ENCODE measurements at regions of chr11 and their contacts with region 1.

Region 1: DNA sequence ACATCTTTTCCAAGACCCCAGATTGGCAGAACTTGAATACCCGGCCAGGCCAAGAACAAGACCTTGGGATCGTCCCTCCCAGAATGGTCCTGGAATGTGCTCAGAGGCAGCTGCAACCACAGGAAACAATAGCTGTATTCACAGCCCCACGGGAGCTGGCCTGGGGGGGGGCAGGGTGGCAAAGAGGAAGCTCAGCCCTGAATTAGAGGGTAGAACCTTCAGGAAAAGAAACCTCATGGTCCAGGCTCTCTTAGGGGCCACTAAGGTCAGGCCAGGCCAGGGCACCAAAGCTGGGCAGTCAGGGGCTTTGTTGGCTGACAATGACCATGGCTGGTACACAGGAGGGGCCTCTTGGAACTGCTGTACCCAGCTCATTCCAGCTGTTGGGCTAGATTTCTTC is 17.3 kb downstream of the RPL27A start:
- DNase-seq: peak; percentile 79
- H3K4me3 Mint-ChIP-seq: no peak overlapping the region
- H3K27ac Mint-ChIP-seq: peak overlapping the region; percentile 82
- H3K4me1 Mint-ChIP-seq: peaks cover 20% of the 10 kb centered on the region
- H3K27me3 Mint-ChIP-seq: no peaks in the 10 kb centered on the region
- CTCF ChIP-seq: no peak

Region 2: DNA sequence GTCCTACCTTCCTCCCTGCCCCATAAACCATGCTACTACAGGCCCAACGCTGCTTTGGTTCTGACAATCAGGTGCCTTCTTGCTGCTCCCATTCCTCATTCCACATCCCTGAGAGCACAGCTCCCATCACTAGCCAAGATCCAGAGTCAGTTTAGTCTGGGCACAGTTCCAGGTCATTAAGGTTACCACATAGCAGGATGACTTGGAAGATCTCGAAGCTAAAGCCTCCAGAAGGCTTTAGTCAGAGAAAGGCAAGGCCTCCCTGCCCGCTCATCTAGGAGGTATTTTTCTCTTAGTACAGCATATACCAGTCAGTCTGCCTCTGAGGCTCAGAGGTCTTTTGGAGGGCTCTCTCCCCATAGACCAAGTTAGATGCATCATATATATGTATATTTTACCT is 47.8 kb before region 1 on chr11:
- CTCF ChIA-PET with region 1: no interaction called
- intact Hi-C with region 1: no loop called
- DNase-seq: no peak
- H3K4me3 Mint-ChIP-seq: no peak overlapping the region
- H3K27ac Mint-ChIP-seq: no peak overlapping the region
- H3K4me1 Mint-ChIP-seq: no peaks in the 10 kb centered on the region
- H3K27me3 Mint-ChIP-seq: no peaks in the 10 kb centered on the region
- CTCF ChIP-seq: no peak

Region 3: DNA sequence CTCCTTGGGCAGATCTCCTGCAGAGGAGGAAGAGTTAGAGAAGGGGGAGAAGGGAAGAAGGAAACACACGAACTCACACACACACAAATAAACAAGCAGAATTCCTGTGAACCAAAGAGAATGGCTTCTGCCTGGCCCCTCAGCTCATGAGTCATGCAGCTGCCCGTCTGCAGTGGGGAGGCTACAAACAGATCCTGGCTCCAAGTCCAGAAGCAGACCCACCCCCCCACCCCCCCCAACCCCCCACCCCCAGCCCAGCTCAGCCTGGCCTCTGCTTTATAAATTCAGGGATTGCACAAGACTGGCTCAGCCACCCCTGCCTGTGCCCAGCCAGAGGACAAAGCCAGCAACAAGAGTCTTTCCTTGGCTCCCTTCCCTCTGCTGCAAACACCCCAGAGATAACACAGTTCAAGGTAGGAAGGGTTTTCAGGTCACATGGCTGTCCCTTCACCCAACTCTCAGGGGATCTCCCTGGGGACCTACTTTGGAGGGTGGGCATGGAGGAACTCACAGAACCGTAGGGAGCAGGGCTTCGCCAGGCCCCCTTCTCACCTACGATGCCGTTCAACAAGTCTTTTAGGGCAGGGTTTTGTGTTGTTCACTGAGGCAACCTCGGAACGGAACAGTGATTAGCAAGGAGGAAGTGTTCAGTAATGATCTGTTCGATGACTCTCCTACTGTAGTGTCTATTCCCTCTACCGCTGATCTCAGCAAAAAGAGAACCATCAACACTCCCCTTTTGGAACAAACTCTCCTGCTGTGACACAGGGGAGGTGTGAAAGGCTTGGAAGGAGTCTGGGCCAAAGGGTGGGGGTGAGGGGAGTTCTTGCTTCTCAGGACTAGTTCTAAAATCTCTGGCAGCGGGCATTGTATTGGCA is 18.2 kb after region 1 on chr11:
- CTCF ChIA-PET with region 1: interaction called, 5 read pairs
- intact Hi-C with region 1: loop called (anchors 2 kb)
- DNase-seq: peak; percentile 43
- H3K4me3 Mint-ChIP-seq: peak overlapping the region; percentile 36
- H3K27ac Mint-ChIP-seq: peak overlapping the region; percentile 88
- H3K4me1 Mint-ChIP-seq: peaks cover 59% of the 10 kb centered on the region
- H3K27me3 Mint-ChIP-seq: no peaks in the 10 kb centered on the region
- CTCF ChIP-seq: no peak

Region 4: GRCh38 chr11:8754241-8754640 is 54.3 kb after region 1 on chr11:
- CTCF ChIA-PET with region 1: no interaction called
- intact Hi-C with region 1: loop called (anchors 5 kb)
- DNase-seq: no peak
- H3K4me3 Mint-ChIP-seq: no peak overlapping the region
- H3K27ac Mint-ChIP-seq: no peak overlapping the region
- H3K4me1 Mint-ChIP-seq: peaks cover 19% of the 10 kb centered on the region
- H3K27me3 Mint-ChIP-seq: no peaks in the 10 kb centered on the region
- CTCF ChIP-seq: no peak

Region 5: DNA sequence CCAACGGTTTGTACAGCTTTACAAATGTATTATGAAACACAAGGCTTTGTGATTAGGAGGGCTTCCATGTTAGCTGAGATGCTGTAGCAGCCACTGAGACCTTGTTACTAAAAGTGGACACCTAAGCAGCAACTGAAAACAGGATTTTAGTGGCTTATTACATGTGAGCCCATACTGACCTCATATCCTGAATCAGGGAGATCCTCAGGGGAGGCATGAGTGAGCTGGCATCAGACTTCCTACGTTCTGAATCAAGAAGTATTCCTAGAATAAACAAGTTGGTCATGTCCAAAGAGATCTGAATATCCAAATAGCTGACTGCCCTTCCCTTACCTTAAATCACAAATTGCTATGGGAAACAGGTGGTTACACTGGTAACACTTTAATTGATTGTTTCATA is 450.6 kb after region 1 on chr11:
- CTCF ChIA-PET with region 1: no interaction called
- intact Hi-C with region 1: no loop called
- DNase-seq: no peak
- H3K4me3 Mint-ChIP-seq: no peak overlapping the region
- H3K27ac Mint-ChIP-seq: no peak overlapping the region
- H3K4me1 Mint-ChIP-seq: peaks cover 10% of the 10 kb centered on the region
- H3K27me3 Mint-ChIP-seq: no peaks in the 10 kb centered on the region
- CTCF ChIP-seq: no peak

Measured in Calu3 (cell line).